ENCODE measurements at regions of chr20 and their contacts with region 1.

Region 1: DNA sequence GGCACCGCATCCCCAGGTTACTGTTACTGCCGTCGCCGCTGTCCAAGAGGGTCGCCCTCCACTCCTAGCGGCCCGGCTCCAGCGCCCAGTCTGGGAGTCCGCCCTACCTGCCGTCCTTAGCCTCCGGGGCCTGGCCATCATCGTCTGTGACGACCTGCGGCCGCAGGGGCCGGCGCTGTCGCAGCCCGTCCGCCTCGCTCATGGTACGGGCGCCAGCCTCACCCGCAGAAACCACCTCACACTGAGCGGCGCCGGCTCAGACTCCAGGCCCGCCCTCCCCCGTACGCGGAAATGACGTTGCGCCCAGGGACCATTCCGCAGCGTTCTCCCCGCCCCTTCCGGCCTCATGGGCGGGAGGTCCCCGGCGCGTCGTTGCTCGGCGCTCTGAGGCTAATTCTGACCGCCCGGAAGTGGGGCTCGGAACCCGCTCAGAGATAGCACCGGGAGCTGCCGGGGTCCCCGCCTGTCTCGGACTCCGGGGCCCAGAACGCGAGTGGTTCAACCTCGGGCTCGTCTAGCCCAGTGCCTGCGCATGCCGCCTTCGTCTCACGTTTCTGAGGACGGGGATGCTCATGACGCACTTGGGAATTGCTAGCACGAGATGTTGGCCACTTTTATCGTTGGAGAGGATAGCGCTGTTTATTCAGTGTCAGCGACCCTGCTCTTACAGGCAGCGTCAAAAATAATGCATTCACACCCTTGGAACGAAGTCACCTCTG is at the start of gene APMAP:
- DNase-seq: peak; percentile 99
- ATAC-seq: peak; percentile 98
- total RNA-seq, gene APMAP: 47.3 TPM

Region 2: GRCh38 chr20:25032478-25033280 is 40.0 kb after region 1 on chr20:
- intact Hi-C with region 1: loop called (anchors 5 kb)
- DNase-seq: peak; percentile 87
- ATAC-seq: peak; percentile 91

Region 3: GRCh38 chr20:25061103-25061799 is 68.6 kb after region 1 on chr20:
- intact Hi-C with region 1: loop called (anchors 5 kb)
- DNase-seq: peak; percentile 46
- ATAC-seq: no peak

Region 4: GRCh38 chr20:25178563-25179438 is 186.2 kb after region 1 on chr20:
- intact Hi-C with region 1: loop called (anchors 10 kb)
- DNase-seq: no peak
- ATAC-seq: peak; percentile 92